Activated CD8-positive, alpha-beta memory T cell treated with anti-CD3 and anti-CD28 coated beads, Interleukin-2, amount 10 ng/mL, durations not matched to agents 7 days and 5 days (primary cell): ENCODE measurements at regions of chr19 and their contacts with region 1.

Region 1: DNA sequence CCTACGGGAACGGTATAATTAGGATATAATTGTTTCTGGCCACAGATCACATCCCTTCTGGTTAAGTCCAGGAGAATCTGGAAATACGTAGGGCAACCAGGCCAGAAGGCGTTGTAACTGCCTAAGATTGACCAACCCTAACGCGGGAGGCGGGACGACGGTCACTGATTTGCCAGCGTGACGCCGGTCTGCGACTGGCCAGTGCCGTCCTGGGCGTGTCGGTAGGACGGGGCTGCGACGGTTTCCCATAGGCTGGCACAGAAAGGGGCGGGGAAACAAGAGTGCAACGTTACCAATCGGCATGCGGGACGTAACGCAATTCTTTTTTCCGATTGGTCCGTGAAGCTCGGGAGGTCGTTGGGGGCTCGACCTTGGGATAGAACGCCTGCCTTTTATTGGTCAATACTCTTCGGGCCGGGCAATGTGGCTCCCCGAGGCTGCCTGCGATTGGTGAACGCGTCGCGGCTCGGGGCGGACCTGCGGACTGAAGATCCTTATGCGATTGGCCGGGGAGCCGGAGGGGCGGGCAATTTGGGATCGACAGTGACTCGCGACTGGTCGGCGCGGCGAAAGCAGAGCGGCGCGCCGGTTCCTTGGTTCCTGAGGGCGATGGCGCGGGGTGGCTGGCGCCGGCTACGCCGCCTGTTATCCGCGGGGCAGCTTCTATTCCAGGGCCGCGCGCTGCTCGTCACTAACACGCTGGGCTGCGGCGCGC is at the start of gene MPV17L2:
- DNase-seq: peak; percentile 100
- ATAC-seq: peak; percentile 94
- H3K4me3 Mint-ChIP-seq: peak within 1 kb of the TSS; percentile 82
- H3K27ac Mint-ChIP-seq: peak within 1 kb of the TSS; percentile 93
- H3K4me1 Mint-ChIP-seq: peaks cover 28% of the 10 kb centered on the region
- H3K27me3 Mint-ChIP-seq: peaks cover 3% of the 10 kb centered on the region
- total RNA-seq, gene MPV17L2: 8.2 to 12.9 TPM

Region 2: GRCh38 chr19:17985037-17985818 is 207.6 kb before region 1 on chr19:
- CTCF ChIA-PET with region 1: no interaction called
- DNase-seq: no peak
- ATAC-seq: no peak
- H3K4me3 Mint-ChIP-seq: no peak overlapping the region
- H3K27ac Mint-ChIP-seq: no peak overlapping the region
- H3K4me1 Mint-ChIP-seq: no peaks in the 10 kb centered on the region
- H3K27me3 Mint-ChIP-seq: peaks cover 4% of the 10 kb centered on the region

Region 3: DNA sequence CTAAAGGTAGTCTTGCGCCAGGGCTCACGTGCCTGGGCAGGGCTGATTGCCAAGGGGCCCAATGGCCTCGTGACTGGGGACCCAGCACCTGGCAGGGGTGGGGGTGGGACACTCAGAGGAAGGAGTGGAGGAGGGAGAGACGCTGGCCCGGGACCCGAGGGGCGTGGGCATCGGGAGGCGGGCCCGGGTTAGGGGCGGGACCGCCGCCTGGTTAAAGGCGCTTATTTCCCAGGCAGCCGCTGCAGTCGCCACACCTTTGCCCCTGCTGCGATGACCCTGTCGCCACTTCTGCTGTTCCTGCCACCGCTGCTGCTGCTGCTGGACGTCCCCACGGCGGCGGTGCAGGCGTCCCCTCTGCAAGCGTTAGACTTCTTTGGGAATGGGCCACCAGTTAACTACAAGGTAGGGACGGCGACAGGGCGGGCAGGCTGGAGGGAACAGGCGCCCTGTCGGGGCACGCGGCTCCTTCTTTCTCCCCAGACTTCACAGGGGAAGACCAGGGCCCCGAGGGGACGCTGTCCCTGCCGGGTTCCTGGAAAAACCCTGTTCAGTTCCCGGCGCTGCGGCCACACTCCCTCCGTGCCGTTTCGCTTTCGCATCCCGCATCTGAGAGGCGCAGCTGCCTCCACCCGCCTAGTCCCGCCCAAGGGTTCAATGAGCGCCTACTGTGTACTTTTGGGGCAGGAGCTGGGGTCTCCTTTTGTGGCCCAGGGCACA is 19.1 kb before region 1 on chr19 and contains the start of gene IFI30:
- CTCF ChIA-PET with region 1: interaction called, 13 read pairs
- DNase-seq: peak; percentile 77
- ATAC-seq: peak; percentile 88
- H3K4me3 Mint-ChIP-seq: peak within 1 kb of the TSS; percentile 83
- H3K27ac Mint-ChIP-seq: peak within 1 kb of the TSS; percentile 84
- H3K4me1 Mint-ChIP-seq: peaks cover 22% of the 10 kb centered on the region
- H3K27me3 Mint-ChIP-seq: no peaks in the 10 kb centered on the region
- total RNA-seq, gene IFI30: 57.1 to 66.2 TPM

Region 4: DNA sequence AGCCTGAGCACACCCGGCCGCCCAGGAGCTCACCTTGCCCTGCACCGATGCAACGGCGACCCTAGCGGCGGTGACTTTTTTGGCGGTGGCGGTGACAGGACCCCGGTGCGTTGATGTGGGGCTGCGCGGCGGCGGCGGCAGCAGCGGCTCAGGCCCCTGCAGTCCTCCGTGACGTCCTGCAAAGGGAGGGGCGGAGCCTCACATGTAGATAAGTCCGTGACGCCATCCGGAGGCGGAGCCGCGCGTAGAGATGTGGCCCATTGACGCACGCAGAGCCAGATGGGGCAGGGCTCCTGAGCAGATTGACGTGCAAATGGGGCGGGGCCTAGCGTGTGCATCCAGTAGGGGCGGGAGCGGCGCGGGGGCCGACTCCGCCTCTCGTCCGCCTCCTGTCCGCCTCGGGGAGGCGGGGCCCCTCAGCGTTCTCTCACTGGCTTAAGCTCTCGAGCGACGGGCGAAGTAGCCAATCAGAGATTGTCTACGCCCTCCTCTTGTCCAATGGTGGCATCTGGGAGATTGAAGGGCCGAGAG is 11.1 kb after region 1 on chr19 and contains the start of gene RAB3A:
- CTCF ChIA-PET with region 1: interaction called, 50 read pairs
- DNase-seq: peak; percentile 100
- ATAC-seq: peak; percentile 93
- H3K4me3 Mint-ChIP-seq: peak within 1 kb of the TSS; percentile 83
- H3K27ac Mint-ChIP-seq: peak within 1 kb of the TSS; percentile 91
- H3K4me1 Mint-ChIP-seq: peaks cover 17% of the 10 kb centered on the region
- H3K27me3 Mint-ChIP-seq: peaks cover 5% of the 10 kb centered on the region
- total RNA-seq, gene RAB3A: 3.5 to 3.7 TPM

Region 5: DNA sequence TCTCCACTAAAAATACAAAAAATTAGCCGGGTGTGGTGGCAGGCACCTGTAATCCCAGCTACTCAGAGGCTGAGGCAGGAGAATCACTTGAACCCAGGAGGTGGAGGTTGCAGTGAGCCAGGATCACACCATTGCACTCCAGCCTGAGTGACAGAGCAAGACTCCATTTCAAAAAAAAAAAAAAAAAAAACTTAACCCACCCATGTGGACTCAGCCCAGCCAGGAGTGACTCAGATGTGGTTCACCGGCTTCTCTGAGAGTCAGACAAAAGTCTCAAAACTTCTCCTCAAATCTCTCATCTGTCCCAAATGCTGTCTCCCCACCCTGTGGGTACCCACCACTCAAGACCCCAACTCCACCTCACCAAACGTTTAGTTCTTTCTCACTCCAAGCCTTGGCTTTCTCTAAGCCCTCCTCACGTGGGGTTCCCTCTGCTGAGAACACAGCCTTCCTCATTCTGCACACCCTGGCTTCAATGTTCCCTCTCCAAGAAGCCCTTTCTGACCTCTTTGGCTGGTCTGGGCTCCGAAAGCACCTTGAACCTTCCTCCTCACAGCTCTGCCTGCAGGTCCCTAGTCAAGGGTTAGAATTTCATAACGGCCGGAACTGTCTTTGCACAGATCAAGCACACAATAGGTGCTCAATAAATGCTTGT is 22.1 kb after region 1 on chr19:
- CTCF ChIA-PET with region 1: no interaction called
- DNase-seq: no peak
- ATAC-seq: peak; percentile 59
- H3K4me3 Mint-ChIP-seq: no peak overlapping the region
- H3K27ac Mint-ChIP-seq: no peak overlapping the region
- H3K4me1 Mint-ChIP-seq: peaks cover 9% of the 10 kb centered on the region
- H3K27me3 Mint-ChIP-seq: peaks cover 5% of the 10 kb centered on the region